ENCODE measurements at regions of chr5 and their contacts with region 1.

Region 1: DNA sequence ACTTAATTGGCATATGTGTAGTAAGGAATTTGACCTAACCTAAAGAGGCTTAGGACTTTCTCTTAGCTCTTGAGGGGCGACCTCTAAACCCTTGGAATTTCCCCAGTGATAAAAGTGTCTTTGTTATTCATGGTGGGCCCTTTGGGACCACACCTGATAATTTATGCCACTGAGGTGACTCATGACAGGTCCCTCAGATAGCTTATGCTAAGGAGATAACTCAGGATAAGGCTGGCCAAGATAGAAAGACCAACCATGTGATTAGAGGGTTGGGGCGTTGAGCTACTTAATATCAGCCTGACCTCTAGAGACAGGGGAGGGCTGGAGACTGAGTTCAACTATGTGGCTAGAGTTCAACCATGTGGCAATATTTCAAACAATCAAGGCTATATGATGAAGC is 218.1 kb downstream of the AP3B1 start:
- DNase-seq: no peak
- ATAC-seq: no peak
- H3K4me3 ChIP-seq: no peak overlapping the region
- H3K27ac ChIP-seq: no peak overlapping the region
- H3K4me1 ChIP-seq: no peaks in the 10 kb centered on the region
- H3K27me3 ChIP-seq: no peaks in the 10 kb centered on the region
- CTCF ChIP-seq: no peak

Region 2: DNA sequence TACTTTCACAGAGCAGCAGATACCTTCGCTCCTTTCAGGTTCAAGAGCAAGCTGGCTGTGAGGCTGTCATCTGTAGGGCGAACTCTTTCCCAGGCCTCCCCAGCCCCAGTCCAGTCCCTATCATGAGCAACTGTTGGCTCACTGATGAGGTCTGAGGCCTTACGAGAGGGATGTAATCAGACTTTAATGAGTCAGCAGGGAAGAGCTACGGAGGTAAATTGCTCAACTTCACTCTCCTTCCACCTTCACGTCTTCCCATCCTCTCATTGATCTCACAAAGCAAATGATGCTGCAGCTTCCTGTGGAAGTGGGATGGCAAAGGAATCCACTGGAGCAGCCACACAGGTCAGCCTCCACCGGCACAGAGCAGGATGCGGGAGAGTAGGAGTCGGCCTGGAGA is 169.5 kb before region 1 on chr5:
- CTCF ChIA-PET with region 1: no interaction called
- POLR2A ChIA-PET with region 1: no interaction called
- in situ Hi-C with region 1: no loop called
- intact Hi-C with region 1: no loop called
- DNase-seq: no peak
- ATAC-seq: no peak
- H3K4me3 ChIP-seq: no peak overlapping the region
- H3K27ac ChIP-seq: no peak overlapping the region
- H3K4me1 ChIP-seq: no peaks in the 10 kb centered on the region
- H3K27me3 ChIP-seq: no peaks in the 10 kb centered on the region
- CTCF ChIP-seq: no peak

Region 3: DNA sequence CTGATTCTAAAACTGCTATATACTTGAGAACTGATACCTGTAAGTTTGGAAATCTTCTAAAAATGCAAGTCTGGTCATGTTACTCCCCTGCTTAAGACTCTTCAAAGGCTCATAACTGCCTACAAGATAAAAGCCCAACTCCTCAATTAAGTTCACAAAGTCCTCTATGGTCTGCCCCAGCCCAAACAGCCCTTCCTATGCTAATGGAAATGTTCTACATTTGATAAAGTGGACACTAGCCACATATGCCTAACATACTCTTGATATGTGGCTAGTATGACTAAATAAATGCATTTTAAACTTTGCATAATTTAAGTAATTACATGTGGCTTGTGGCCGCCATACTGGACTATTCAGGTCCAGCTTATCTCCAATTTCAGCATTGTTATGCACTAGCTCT is 13.7 kb after region 1 on chr5:
- CTCF ChIA-PET with region 1: interaction called, 17 read pairs
- POLR2A ChIA-PET with region 1: no interaction called
- in situ Hi-C with region 1: no loop called
- intact Hi-C with region 1: no loop called
- DNase-seq: no peak
- ATAC-seq: no peak
- H3K4me3 ChIP-seq: no peak overlapping the region
- H3K27ac ChIP-seq: no peak overlapping the region
- H3K4me1 ChIP-seq: no peaks in the 10 kb centered on the region
- H3K27me3 ChIP-seq: no peaks in the 10 kb centered on the region
- CTCF ChIP-seq: no peak